B cell (primary cell): ENCODE measurements at regions of chr2 and their contacts with region 1.

Region 1: DNA sequence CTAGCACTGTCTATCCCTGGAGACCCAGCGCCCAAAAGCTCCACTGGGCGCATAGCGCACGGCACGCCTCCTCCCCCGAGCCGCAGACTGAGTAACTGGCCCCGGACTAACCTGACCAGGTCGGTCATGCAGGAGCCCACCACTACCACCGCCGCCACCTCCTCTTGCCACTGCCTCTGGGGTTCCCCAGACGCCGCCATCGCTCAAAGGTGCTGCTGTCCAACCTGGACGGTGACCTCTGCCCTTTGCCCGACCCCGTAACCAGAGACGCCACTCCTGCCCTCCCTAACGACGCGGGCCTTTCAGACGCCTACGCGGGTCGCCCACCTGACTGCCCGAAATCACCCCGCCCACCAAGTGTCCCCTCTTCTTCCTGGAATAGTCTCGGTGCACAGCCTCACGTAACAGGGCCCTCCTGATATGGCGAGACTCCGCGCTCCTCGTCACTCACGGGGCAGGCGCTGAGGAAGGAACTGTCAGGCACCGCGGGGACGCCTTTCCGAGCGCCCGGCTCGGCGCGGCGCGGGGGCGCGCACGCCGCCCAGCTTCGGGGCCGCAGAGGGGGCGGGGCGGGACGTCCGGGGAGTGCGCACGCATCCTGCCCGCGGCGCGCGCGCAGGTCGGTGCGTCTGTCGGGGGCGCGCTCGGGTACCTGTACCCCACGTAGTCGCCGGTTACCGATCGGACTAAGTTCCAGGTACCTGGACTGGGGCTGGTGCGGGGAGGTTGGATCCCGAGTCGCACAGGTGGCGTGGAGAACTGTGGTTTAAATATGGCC is at the starts of genes BABAM2 and RBKS:
- DNase-seq: peak; percentile 97
- ATAC-seq: peak; percentile 63
- H3K4me3 ChIP-seq: peak within 1 kb of the TSS; percentile 68 to 93 (median 84)
- H3K4me3 Mint-ChIP-seq: peak within 1 kb of the TSS; percentile 100
- H3K27ac ChIP-seq: peak within 1 kb of the TSS; percentile 99
- H3K27ac Mint-ChIP-seq: peak within 1 kb of the TSS; percentile 100
- H3K4me1 ChIP-seq: peaks cover 14 to 18% of the 10 kb centered on the region in 2 donors
- H3K4me1 Mint-ChIP-seq: peaks cover 61% of the 10 kb centered on the region
- H3K27me3 ChIP-seq: no peaks in the 10 kb centered on the region
- H3K27me3 Mint-ChIP-seq: peaks cover 3% of the 10 kb centered on the region
- CTCF ChIP-seq: no peak
- total RNA-seq, gene BABAM2: 69.6 and 70.6 TPM in 2 replicates
- total RNA-seq, gene RBKS: 6.4 and 6.8 TPM in 2 replicates

Region 2: GRCh38 chr2:26785431-26786206 is 1104.7 kb before region 1 on chr2 and contains the start of gene CENPA:
- CTCF ChIA-PET with region 1: no interaction called
- POLR2A ChIA-PET with region 1: no interaction called
- intact Hi-C with region 1: loop called (anchors 10 kb)
- DNase-seq: peak; percentile 98
- ATAC-seq: peak; percentile 99
- H3K4me3 ChIP-seq: peak within 1 kb of the TSS; percentile 51 to 81 (median 71)
- H3K4me3 Mint-ChIP-seq: peak within 1 kb of the TSS; percentile 93
- H3K27ac ChIP-seq: peak within 1 kb of the TSS; percentile 27 to 41
- H3K27ac Mint-ChIP-seq: peak within 1 kb of the TSS; percentile 83
- H3K4me1 ChIP-seq: peaks cover 8 to 14% of the 10 kb centered on the region in 2 donors
- H3K4me1 Mint-ChIP-seq: peaks cover 13% of the 10 kb centered on the region
- H3K27me3 ChIP-seq: no peaks in the 10 kb centered on the region
- H3K27me3 Mint-ChIP-seq: peaks cover 3% of the 10 kb centered on the region
- CTCF ChIP-seq: peak; percentile 7
- total RNA-seq, gene CENPA: not detected in 2 replicates

Region 3: GRCh38 chr2:27771548-27772335 is 118.6 kb before region 1 on chr2 and contains the start of gene MRPL33:
- CTCF ChIA-PET with region 1: no interaction called
- POLR2A ChIA-PET with region 1: interaction called, 3 read pairs
- intact Hi-C with region 1: loop called (anchors 1 kb)
- DNase-seq: peak; percentile 93
- ATAC-seq: peak; percentile 94
- H3K4me3 ChIP-seq: peak within 1 kb of the TSS; percentile 62 to 91 (median 85)
- H3K4me3 Mint-ChIP-seq: peak within 1 kb of the TSS; percentile 100
- H3K27ac ChIP-seq: peak within 1 kb of the TSS; percentile 75 to 93
- H3K27ac Mint-ChIP-seq: peak within 1 kb of the TSS; percentile 99
- H3K4me1 ChIP-seq: peaks cover 11 to 22% of the 10 kb centered on the region in 2 donors
- H3K4me1 Mint-ChIP-seq: peaks cover 34% of the 10 kb centered on the region
- H3K27me3 ChIP-seq: peaks cover 0 to 16% (median 2%) of the 10 kb centered on the region in 4 experiments
- H3K27me3 Mint-ChIP-seq: peaks cover 13% of the 10 kb centered on the region
- CTCF ChIP-seq: no peak
- total RNA-seq, gene MRPL33: 26.5 and 26.9 TPM in 2 replicates

Region 4: DNA sequence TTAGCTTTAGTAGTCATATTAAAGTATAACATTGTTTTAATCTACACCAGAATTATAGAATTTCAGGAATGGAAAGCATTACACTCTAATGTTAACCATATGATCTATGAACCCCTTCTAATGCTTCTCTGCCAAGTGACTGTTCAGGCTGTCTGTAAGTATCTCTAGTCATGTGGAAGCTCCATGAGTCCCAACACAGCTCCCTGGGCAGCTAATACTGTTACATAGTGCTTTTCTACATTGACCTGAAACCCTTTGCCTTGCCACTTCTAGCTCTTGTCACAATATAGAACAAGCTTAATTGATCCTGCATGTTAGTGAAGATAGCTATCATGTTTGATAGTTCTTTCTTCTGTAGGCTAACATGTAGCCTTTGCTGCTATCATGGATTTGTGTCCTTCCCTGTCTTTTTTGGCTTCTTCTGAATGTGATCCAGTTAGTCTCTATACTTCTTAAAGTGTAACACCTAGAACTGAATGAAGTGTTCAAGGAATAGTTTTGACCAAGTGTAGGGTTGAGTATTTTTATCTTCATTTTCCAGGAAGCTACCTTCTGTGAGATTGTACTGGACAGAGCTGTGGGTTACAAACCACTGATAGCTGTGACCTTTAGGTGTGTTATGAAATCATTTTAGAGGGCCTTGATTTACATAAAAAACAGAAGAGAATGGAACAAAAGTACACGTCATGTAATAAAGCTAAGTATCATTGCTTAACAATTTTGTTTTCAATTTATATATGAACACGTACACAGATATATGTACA is 23.9 kb after region 1 on chr2:
- CTCF ChIA-PET with region 1: no interaction called
- POLR2A ChIA-PET with region 1: no interaction called
- intact Hi-C with region 1: loop called (anchors 2 kb)
- DNase-seq: no peak
- ATAC-seq: no peak
- H3K4me3 ChIP-seq: no peak overlapping the region
- H3K4me3 Mint-ChIP-seq: no peak overlapping the region
- H3K27ac ChIP-seq: no peak overlapping the region
- H3K27ac Mint-ChIP-seq: peak overlapping the region; percentile 67
- H3K4me1 ChIP-seq: peaks cover 4 to 8% of the 10 kb centered on the region in 2 donors
- H3K4me1 Mint-ChIP-seq: peaks cover 21% of the 10 kb centered on the region
- H3K27me3 ChIP-seq: no peaks in the 10 kb centered on the region
- H3K27me3 Mint-ChIP-seq: no peaks in the 10 kb centered on the region
- CTCF ChIP-seq: no peak

Region 5: GRCh38 chr2:28392297-28393113 is 502.2 kb after region 1 on chr2 and contains the start of gene FOSL2:
- CTCF ChIA-PET with region 1: no interaction called
- POLR2A ChIA-PET with region 1: interaction called, 15 read pairs
- intact Hi-C with region 1: no loop called
- DNase-seq: peak; percentile 84
- ATAC-seq: peak; percentile 78
- H3K4me3 ChIP-seq: peak within 1 kb of the TSS; percentile 42 to 90 (median 61)
- H3K4me3 Mint-ChIP-seq: peak within 1 kb of the TSS; percentile 89
- H3K27ac ChIP-seq: peak within 1 kb of the TSS; percentile 6 to 52
- H3K27ac Mint-ChIP-seq: peak within 1 kb of the TSS; percentile 87
- H3K4me1 ChIP-seq: peaks cover 18% of the 10 kb centered on the region in 2 donors
- H3K4me1 Mint-ChIP-seq: peaks cover 25% of the 10 kb centered on the region
- H3K27me3 ChIP-seq: peaks cover 0 to 31% (median 4%) of the 10 kb centered on the region in 4 experiments
- H3K27me3 Mint-ChIP-seq: peaks cover 17% of the 10 kb centered on the region
- CTCF ChIP-seq: no peak
- total RNA-seq, gene FOSL2: 37.7 and 42.2 TPM in 2 replicates

Region 6: DNA sequence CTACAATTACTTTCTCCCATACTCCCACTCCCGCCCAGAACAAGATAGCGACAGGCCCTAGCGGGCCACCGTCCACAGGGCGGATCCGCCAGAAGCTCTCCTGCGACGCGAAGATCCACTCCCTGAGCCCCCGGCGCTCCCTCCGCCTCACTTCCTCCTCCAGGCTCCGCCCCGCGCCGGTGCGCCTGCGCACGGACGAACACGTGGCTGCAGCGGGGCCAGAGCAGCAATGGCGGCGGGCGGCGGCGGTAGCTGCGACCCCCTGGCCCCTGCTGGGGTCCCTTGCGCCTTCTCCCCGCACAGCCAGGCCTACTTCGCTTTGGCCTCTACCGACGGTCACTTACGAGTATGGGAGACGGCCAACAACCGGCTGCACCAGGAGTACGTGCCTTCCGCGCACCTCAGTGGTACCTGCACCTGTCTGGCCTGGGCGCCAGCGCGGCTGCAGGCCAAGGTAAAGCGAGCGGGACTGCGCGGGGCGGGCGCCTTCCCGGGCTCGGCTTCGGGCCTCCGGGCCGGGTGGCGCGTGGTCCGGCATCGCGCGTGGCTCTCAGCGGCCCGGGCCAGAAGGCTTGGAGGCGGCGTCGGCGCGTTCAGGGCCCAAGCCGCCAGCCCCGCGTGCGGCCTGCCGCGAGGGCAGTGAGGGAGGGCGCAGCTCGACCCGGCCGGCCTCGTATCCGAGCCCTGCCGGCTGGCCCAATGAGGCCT is 1004.3 kb after region 1 on chr2 and contains the start of gene WDR43:
- CTCF ChIA-PET with region 1: no interaction called
- POLR2A ChIA-PET with region 1: no interaction called
- intact Hi-C with region 1: loop called (anchors 2 kb)
- DNase-seq: peak; percentile 98
- ATAC-seq: peak; percentile 97
- H3K4me3 ChIP-seq: peak within 1 kb of the TSS; percentile 64 to 89 (median 84)
- H3K4me3 Mint-ChIP-seq: peak within 1 kb of the TSS; percentile 92
- H3K27ac ChIP-seq: peak within 1 kb of the TSS; percentile 71 to 81
- H3K27ac Mint-ChIP-seq: peak within 1 kb of the TSS; percentile 94
- H3K4me1 ChIP-seq: peaks cover 26 to 30% of the 10 kb centered on the region in 2 donors
- H3K4me1 Mint-ChIP-seq: peaks cover 43% of the 10 kb centered on the region
- H3K27me3 ChIP-seq: no peaks in the 10 kb centered on the region
- H3K27me3 Mint-ChIP-seq: no peaks in the 10 kb centered on the region
- CTCF ChIP-seq: no peak
- total RNA-seq, gene WDR43: 48.6 and 51.0 TPM in 2 replicates